ENCODE measurements at regions of chr19 and their contacts with region 1.

Region 1: DNA sequence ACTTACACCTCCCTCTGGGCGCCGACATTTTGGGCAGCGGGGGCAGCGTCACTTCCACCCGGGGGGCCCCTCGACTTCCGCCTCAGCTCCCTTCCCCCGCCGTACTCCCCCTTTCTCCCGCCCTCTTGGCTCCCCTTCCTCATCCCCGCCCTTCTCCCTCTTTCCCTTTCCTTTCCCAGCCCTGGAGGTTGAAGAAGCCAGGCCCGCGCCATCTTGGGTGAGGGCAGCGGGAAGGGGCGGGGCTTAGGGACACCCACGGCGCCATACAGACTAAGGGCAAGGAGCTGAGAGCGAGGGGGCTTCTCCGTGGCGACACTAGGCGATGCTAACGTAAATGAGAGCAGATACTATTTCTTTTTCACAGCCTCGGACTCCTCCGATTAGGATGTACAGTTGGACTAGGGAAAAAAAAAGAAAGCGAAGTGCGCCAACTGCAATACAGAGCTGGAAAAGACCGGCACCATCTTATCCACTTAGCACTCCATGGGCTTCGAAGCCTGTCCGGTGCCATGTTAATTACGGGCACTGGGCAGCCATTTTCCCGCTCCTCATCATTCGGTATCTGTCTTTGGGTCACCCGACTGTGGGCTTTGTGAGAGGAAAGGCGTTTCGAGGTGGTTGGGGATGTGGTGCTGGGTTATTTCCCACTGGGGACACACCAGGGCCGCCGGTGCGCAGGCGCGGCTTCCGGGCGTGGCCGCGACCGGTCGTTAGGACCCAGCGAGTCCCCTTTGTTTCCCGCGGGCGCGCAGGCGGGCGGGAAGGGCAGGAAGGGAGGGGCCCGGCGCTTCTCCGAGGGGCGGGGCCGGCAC is at the start of gene FIZ1:
- DNase-seq: peak; percentile 99
- ATAC-seq: peak; percentile 70
- H3K4me3 ChIP-seq: peak within 1 kb of the TSS; percentile 59 to 97 (median 82)
- H3K4me3 Mint-ChIP-seq: peak within 1 kb of the TSS; percentile 100
- H3K27ac ChIP-seq: peak within 1 kb of the TSS; percentile 86 to 94
- H3K27ac Mint-ChIP-seq: peak within 1 kb of the TSS; percentile 99
- H3K4me1 ChIP-seq: peaks cover 9 to 24% of the 10 kb centered on the region in 2 donors
- H3K4me1 Mint-ChIP-seq: peaks cover 25% of the 10 kb centered on the region
- H3K27me3 ChIP-seq: no peaks in the 10 kb centered on the region
- H3K27me3 Mint-ChIP-seq: no peaks in the 10 kb centered on the region
- CTCF ChIP-seq: no peak
- total RNA-seq, gene FIZ1: 21.4 and 26.4 TPM in 2 replicates

Region 2: GRCh38 chr19:55407800-55408532 is 191.7 kb before region 1 on chr19:
- CTCF ChIA-PET with region 1: no interaction called
- POLR2A ChIA-PET with region 1: interaction called, 3 read pairs
- intact Hi-C with region 1: loop called (anchors 5 kb)
- DNase-seq: peak; percentile 100
- ATAC-seq: peak; percentile 83
- H3K4me3 ChIP-seq: peak overlapping the region; percentile 55 to 89 (median 77)
- H3K4me3 Mint-ChIP-seq: peak overlapping the region; percentile 98
- H3K27ac ChIP-seq: peak overlapping the region; percentile 99 to 100
- H3K27ac Mint-ChIP-seq: peak overlapping the region; percentile 99
- H3K4me1 ChIP-seq: peaks cover 11 to 25% of the 10 kb centered on the region in 2 donors
- H3K4me1 Mint-ChIP-seq: peaks cover 32% of the 10 kb centered on the region
- H3K27me3 ChIP-seq: no peaks in the 10 kb centered on the region
- H3K27me3 Mint-ChIP-seq: no peaks in the 10 kb centered on the region
- CTCF ChIP-seq: no peak

Region 3: DNA sequence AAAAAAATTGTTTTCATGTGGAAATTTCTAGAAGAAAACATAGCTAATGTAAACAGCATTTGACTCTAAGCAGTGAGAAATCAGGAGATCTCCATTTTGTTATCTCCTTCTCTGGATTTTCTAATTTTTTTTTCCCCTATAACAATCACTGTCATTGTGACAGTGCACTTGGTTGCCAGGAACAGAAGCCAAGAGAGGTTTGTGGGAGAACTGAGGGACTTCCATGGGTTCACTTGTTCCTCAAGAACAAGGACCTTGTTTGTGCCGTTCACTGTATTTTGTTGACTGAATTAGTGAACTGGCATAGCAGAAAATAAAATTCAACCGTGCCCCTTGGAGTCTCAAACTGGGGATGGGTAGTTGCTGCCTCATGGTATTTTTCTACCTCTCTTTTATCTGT is 173.6 kb before region 1 on chr19:
- CTCF ChIA-PET with region 1: no interaction called
- POLR2A ChIA-PET with region 1: no interaction called
- intact Hi-C with region 1: no loop called
- DNase-seq: no peak
- ATAC-seq: no peak
- H3K4me3 ChIP-seq: no peak overlapping the region
- H3K4me3 Mint-ChIP-seq: no peak overlapping the region
- H3K27ac ChIP-seq: no peak overlapping the region
- H3K27ac Mint-ChIP-seq: no peak overlapping the region
- H3K4me1 ChIP-seq: no peaks in the 10 kb centered on the region
- H3K4me1 Mint-ChIP-seq: no peaks in the 10 kb centered on the region
- H3K27me3 ChIP-seq: peaks cover 0 to 39% (median 10%) of the 10 kb centered on the region in 4 experiments
- H3K27me3 Mint-ChIP-seq: peaks cover 46% of the 10 kb centered on the region
- CTCF ChIP-seq: no peak

Region 4: DNA sequence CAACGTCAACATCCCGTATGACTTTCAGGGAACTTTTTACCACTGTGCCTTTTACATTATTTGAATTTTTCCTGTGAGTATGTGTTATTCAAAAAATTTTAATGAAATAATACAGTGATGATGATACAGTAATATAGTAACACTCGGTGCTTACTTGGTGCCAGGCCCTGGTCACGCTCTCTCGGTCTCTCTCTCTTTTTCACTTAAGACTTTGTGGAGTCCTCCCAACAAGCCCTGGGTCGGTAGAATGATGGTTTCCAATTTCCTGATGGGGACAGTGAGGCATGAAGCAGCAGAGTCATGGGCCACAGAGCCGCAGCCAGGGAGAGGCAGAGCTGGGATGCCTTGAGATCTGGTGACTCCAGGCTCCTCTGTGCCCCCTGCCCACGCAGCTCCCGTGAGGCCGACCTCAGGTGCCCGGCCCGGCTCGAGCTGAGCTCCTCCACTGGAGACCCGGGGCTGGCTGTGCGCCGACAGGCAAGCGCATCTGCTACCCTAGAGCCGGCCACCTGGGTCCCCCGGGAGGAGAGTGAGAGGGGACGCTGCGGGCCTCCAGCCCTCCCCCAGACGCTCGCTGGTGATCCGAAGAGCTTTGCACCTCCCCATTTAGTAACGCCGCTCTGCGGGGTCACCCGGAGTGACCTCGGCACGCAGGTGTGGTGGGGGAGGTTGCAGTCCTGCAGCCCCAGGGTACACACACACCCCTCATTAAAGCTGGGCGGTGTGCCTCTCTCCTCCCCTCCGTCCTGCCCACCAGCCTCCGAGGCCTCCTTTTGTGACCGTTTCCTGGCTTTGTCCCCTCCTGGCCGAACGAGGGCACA is 50.0 kb before region 1 on chr19:
- CTCF ChIA-PET with region 1: no interaction called
- POLR2A ChIA-PET with region 1: no interaction called
- intact Hi-C with region 1: no loop called
- DNase-seq: no peak
- ATAC-seq: no peak
- H3K4me3 ChIP-seq: no peak overlapping the region
- H3K4me3 Mint-ChIP-seq: no peak overlapping the region
- H3K27ac ChIP-seq: no peak overlapping the region
- H3K27ac Mint-ChIP-seq: no peak overlapping the region
- H3K4me1 ChIP-seq: no peaks in the 10 kb centered on the region
- H3K4me1 Mint-ChIP-seq: peaks cover 2% of the 10 kb centered on the region
- H3K27me3 ChIP-seq: peaks cover 0 to 18% (median 4%) of the 10 kb centered on the region in 4 experiments
- H3K27me3 Mint-ChIP-seq: peaks cover 48% of the 10 kb centered on the region
- CTCF ChIP-seq: no peak

Region 5: DNA sequence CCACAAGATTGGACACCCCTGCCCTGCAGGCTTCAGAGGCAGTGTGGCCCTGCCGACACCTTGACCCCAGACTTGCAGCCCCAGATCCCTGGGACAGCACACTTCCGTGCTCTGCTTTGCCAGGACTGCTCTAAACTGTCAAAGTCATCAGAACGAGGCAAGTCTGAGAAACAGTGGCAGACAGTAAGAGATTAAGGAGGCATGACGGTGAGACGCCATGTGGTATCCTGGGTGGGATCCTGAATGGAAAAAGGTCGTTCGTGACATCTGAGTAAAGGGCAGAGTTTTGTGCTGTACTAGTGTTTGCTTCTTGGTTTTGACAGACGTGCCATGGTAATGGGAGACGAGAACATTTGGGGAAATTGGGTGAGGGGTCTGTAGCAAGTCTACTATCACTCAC is 32.9 kb before region 1 on chr19:
- CTCF ChIA-PET with region 1: no interaction called
- POLR2A ChIA-PET with region 1: no interaction called
- intact Hi-C with region 1: no loop called
- DNase-seq: no peak
- ATAC-seq: no peak
- H3K4me3 ChIP-seq: no peak overlapping the region
- H3K4me3 Mint-ChIP-seq: no peak overlapping the region
- H3K27ac ChIP-seq: no peak overlapping the region
- H3K27ac Mint-ChIP-seq: no peak overlapping the region
- H3K4me1 ChIP-seq: no peaks in the 10 kb centered on the region
- H3K4me1 Mint-ChIP-seq: no peaks in the 10 kb centered on the region
- H3K27me3 ChIP-seq: peaks cover 0 to 16% (median 0%) of the 10 kb centered on the region in 4 experiments
- H3K27me3 Mint-ChIP-seq: peaks cover 15% of the 10 kb centered on the region
- CTCF ChIP-seq: no peak

Region 6: DNA sequence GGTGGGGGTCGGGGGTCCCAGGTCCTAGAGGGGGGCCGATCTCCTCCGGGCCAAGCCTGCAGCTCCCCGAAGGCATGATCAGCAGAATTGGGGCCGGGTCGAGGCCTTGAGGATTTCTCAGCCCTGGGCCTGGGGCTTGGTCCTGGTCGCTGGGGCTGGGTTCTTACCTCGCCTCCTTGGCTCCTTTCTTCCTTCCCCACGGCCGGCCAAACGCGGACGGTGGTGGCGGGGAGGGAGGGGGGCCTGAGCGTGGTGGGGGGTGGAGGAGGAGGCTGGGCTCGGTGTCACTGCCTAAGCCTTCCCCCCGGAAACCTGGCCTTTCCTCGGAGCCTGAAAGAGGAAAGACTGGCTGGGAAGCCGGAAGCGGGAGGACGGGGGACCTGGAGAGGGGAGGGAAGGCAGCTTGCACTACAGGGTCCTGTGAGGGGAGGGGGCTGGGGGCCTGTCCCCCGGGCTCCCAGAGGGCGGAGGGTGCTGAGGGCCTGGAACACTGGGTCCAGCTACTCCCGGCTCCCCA is 19.0 kb before region 1 on chr19 and contains the start of gene ZNF579:
- CTCF ChIA-PET with region 1: interaction called, 3 read pairs
- POLR2A ChIA-PET with region 1: interaction called, 12 read pairs
- intact Hi-C with region 1: loop called (anchors 2 kb)
- DNase-seq: peak; percentile 83
- ATAC-seq: peak; percentile 71
- H3K4me3 ChIP-seq: peak within 1 kb of the TSS; percentile 19 to 78 (median 69)
- H3K4me3 Mint-ChIP-seq: peak within 1 kb of the TSS; percentile 83
- H3K27ac ChIP-seq: peak within 1 kb of the TSS; percentile 66 to 80
- H3K27ac Mint-ChIP-seq: peak within 1 kb of the TSS; percentile 68
- H3K4me1 ChIP-seq: peaks cover 22 to 25% of the 10 kb centered on the region in 2 donors
- H3K4me1 Mint-ChIP-seq: peaks cover 33% of the 10 kb centered on the region
- H3K27me3 ChIP-seq: no peaks in the 10 kb centered on the region
- H3K27me3 Mint-ChIP-seq: no peaks in the 10 kb centered on the region
- CTCF ChIP-seq: no peak
- total RNA-seq, gene ZNF579: 10.3 and 10.8 TPM in 2 replicates

Region 7: DNA sequence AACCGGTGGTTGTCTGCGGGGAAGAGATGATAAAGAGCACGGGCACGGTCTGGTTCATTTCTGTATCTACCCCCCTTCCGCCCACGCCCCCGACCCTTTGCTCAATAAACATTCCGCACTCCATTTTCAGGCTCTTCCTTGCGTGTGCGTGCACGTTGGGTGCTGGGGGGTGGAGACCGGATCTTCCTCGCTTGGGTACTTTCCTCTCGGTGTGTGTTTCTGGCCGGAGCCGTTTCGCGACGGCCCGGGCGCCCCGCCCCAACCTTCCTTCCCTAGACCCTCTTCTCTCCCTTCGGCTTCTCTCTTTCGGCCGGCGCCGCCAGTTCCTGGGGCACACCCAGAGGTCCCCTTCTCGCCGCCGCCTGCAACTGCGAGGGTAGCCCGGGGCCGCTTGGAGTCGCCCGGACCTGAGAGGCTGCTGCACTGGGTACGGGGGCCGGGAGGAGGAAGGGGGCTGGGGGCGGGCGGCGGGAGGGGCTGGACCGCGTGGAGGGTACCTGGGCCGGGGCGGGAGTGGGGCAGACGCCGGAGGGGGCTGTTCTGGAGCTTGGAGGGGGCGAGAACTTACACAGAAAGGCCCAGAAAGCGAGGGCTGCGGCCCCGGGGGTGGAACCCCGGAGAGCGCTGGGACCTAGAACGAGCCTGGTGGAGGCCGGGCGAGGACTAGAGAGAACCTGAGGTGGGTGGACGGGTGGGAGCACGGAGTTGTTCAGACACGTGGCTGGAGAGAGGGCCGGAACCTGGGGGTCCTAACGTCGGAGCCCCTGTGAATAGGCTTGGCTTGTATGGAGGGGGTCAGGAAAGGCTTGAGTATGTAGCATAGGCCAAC is 43.9 kb after region 1 on chr19 and contains the start of gene ZNF581:
- CTCF ChIA-PET with region 1: interaction called, 4 read pairs
- POLR2A ChIA-PET with region 1: interaction called, 13 read pairs
- intact Hi-C with region 1: no loop called
- DNase-seq: peak; percentile 90
- ATAC-seq: peak; percentile 36
- H3K4me3 ChIP-seq: peak within 1 kb of the TSS; percentile 59 to 85 (median 78)
- H3K4me3 Mint-ChIP-seq: peak within 1 kb of the TSS; percentile 88
- H3K27ac ChIP-seq: peak within 1 kb of the TSS; percentile 79 to 82
- H3K27ac Mint-ChIP-seq: peak within 1 kb of the TSS; percentile 98
- H3K4me1 ChIP-seq: peaks cover 32 to 68% of the 10 kb centered on the region in 2 donors
- H3K4me1 Mint-ChIP-seq: peaks cover 60% of the 10 kb centered on the region
- H3K27me3 ChIP-seq: no peaks in the 10 kb centered on the region
- H3K27me3 Mint-ChIP-seq: no peaks in the 10 kb centered on the region
- CTCF ChIP-seq: no peak
- total RNA-seq, gene ZNF581: 47.3 and 51.3 TPM in 2 replicates

Region 8: GRCh38 chr19:55670280-55671053 is 70.8 kb after region 1 on chr19:
- CTCF ChIA-PET with region 1: no interaction called
- POLR2A ChIA-PET with region 1: no interaction called
- intact Hi-C with region 1: no loop called
- DNase-seq: peak; percentile 65
- ATAC-seq: no peak
- H3K4me3 ChIP-seq: no peak overlapping the region
- H3K4me3 Mint-ChIP-seq: no peak overlapping the region
- H3K27ac ChIP-seq: no peak overlapping the region
- H3K27ac Mint-ChIP-seq: no peak overlapping the region
- H3K4me1 ChIP-seq: peaks cover 0 to 13% of the 10 kb centered on the region in 2 donors
- H3K4me1 Mint-ChIP-seq: peaks cover 30% of the 10 kb centered on the region
- H3K27me3 ChIP-seq: no peaks in the 10 kb centered on the region
- H3K27me3 Mint-ChIP-seq: no peaks in the 10 kb centered on the region
- CTCF ChIP-seq: no peak